MCF 10A (cell line): ENCODE measurements at regions of chr2 and their contacts with region 1.

Region 1: GRCh38 chr2:225889446-225889850 is 489.9 kb downstream of the NYAP2 start:
- DNase-seq: peak; percentile 70
- H3K4me3 Mint-ChIP-seq: no peak overlapping the region
- H3K27ac Mint-ChIP-seq: no peak overlapping the region
- H3K4me1 Mint-ChIP-seq: peaks cover 2% of the 10 kb centered on the region
- H3K27me3 Mint-ChIP-seq: no peaks in the 10 kb centered on the region
- CTCF ChIP-seq: peak; percentile 77

Region 2: DNA sequence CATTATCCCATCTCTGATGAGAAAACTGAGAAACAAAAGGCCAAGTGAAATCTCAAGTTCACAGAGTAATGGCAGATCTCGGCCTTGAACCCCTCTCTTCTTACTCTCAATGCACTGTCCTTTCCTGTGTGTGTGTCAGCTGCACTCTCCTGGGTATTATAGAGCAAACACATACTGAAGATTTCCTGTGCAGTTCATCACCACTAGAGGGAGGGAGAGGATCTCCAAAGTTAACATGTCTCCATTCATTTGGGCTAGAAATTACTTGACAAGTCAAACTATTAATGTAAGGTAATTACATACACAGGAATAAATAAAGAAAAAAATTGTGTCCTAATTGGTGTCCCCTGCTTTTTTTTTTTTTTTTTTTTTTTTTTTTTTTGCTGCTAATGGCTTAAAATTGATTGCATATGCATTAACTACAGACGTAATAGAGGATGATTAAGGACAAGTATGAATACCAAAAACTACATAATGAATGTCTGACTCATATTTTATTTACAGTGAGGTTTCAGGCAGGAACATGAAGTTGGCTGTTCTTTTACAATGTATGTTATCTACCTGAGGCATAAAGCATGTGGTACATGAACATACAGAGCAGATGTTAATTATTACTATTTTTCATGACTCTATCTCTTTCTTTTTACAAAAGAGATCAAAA is 220.7 kb before region 1 on chr2:
- CTCF ChIA-PET with region 1: interaction called, 7 read pairs
- POLR2A ChIA-PET with region 1: interaction called, 3 read pairs
- intact Hi-C with region 1: loop called (anchors 5 kb)
- DNase-seq: peak; percentile 77
- H3K4me3 Mint-ChIP-seq: no peak overlapping the region
- H3K27ac Mint-ChIP-seq: no peak overlapping the region
- H3K4me1 Mint-ChIP-seq: peaks cover 5% of the 10 kb centered on the region
- H3K27me3 Mint-ChIP-seq: no peaks in the 10 kb centered on the region
- CTCF ChIP-seq: peak; percentile 74

Region 3: DNA sequence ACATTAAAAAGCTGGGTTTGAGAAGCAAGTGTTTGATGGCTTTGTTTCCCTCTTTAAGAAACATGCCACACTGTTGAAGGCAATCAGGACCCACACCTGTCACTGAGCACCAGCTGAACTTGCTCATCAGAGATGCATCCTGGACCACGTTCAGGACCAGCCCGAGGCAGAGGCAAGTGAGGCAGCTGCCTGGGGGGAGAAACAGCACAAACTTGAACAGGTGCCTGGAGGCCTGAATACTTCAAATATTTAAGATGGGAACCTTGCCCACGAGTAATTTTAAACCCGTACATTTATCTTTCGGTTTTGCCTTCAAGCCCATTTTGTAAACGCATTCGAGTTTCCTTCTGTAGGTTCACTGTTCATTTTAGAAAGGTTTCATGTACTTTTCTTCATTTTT is 68.6 kb before region 1 on chr2:
- CTCF ChIA-PET with region 1: no interaction called
- POLR2A ChIA-PET with region 1: no interaction called
- intact Hi-C with region 1: no loop called
- DNase-seq: no peak
- H3K4me3 Mint-ChIP-seq: no peak overlapping the region
- H3K27ac Mint-ChIP-seq: no peak overlapping the region
- H3K4me1 Mint-ChIP-seq: no peaks in the 10 kb centered on the region
- H3K27me3 Mint-ChIP-seq: no peaks in the 10 kb centered on the region
- CTCF ChIP-seq: no peak

Region 4: GRCh38 chr2:226185616-226186211 is 296.3 kb after region 1 on chr2:
- CTCF ChIA-PET with region 1: interaction called, 3 read pairs
- POLR2A ChIA-PET with region 1: no interaction called
- intact Hi-C with region 1: loop called (anchors 10 kb)
- DNase-seq: peak; percentile 66
- H3K4me3 Mint-ChIP-seq: peak overlapping the region; percentile 20
- H3K27ac Mint-ChIP-seq: peak overlapping the region; percentile 95
- H3K4me1 Mint-ChIP-seq: peaks cover 16% of the 10 kb centered on the region
- H3K27me3 Mint-ChIP-seq: no peaks in the 10 kb centered on the region
- CTCF ChIP-seq: no peak

Region 5: GRCh38 chr2:226423498-226423960 is 534.1 kb after region 1 on chr2:
- CTCF ChIA-PET with region 1: interaction called, 4 read pairs
- POLR2A ChIA-PET with region 1: no interaction called
- intact Hi-C with region 1: loop called (anchors 10 kb)
- DNase-seq: no peak
- H3K4me3 Mint-ChIP-seq: no peak overlapping the region
- H3K27ac Mint-ChIP-seq: no peak overlapping the region
- H3K4me1 Mint-ChIP-seq: peaks cover 26% of the 10 kb centered on the region
- H3K27me3 Mint-ChIP-seq: no peaks in the 10 kb centered on the region
- CTCF ChIP-seq: no peak